ENCODE measurements at regions of chr22 and their contacts with region 1.

Region 1: DNA sequence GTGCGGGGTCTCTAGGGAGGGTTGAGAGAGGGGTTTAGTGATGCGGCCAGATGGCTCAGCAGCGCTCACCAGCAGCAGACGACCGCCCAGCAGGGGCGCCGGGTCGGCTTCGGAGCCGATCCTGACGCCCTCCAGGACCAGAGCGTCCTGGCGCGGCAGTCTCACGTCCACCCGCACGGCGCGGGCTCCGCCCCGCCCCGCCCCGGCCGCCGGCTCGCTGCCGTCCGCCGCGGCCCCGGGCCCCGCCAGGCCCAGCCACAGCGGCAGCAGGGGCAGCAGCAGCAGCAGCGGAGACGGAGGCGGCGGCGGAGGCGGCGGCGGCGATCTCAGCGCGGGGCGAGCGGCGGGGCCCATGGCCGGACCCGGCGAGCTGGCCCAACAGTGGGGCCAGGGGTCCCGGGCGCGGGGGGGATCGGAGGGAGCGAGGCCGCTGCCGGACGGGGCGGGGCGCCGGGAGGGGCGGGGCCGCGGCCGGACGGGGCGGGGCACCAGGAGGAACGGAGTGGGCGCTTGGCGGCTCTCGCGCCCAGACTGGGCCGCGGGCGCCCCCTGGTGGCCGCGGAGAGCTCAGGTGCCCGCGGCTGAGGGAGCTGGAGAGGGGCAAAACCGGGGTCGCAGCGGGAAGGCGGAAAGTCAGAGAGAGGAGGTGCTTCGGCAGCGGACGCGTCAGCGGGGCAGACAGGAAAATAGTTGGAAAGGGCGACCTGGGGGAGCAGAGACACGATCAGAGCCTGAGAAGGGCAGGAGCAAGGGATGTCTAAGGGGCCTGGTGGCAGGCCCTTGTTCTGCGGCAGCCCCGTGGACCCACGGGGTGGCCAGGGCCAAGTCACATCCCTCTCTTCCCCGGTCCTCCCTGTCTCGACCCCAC is at the start of gene RNF215:
- DNase-seq: peak; percentile 76

Region 2: GRCh38 chr22:30116362-30117117 is 270.7 kb before region 1 on chr22:
- in situ Hi-C with region 1: loop called (anchors 25 kb)
- DNase-seq: no peak

Region 3: DNA sequence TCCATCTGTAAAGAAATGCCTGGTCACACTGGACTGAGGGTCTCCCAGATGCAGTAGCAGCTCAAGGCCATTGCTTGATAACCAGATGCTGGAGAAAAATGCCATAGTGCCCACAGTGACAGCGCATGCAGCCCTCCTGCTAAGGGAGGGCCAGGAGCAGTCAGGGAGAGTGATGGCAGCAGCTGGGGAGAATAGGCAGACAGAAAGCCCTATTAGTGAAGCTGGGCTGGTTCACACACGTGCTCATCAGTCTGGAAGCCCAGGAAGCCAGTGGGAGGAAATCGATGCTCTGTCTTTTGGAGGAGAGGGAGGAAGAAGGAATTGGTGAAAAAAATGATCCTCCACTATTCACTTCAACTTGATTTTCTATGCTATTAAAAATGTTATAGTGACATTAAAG is 390.4 kb after region 1 on chr22:
- in situ Hi-C with region 1: no loop called
- DNase-seq: no peak